HepG2 (cell line): ENCODE measurements at regions of chr15 and their contacts with region 1.

Region 1: GRCh38 chr15:48800811-48801455 is 9.9 kb downstream of the CEP152 start:
- DNase-seq: peak; percentile 26
- ATAC-seq: no peak
- H3K4me3 ChIP-seq: peak overlapping the region in 1 of 3 experiments; percentile 22; a peak in 2 of 6 replicates
- H3K27ac ChIP-seq: peak overlapping the region; percentile 56
- H3K4me1 ChIP-seq: peaks cover 21% of the 10 kb centered on the region
- H3K27me3 ChIP-seq: no peaks in the 10 kb centered on the region
- CTCF ChIP-seq: 0 out of 2 replicates have a peak, but pooled peaks have one; percentile 25
- EP300 ChIP-seq: no peak
- POLR2A ChIP-seq: no peak
- RAD21 ChIP-seq: no peak

Region 2: DNA sequence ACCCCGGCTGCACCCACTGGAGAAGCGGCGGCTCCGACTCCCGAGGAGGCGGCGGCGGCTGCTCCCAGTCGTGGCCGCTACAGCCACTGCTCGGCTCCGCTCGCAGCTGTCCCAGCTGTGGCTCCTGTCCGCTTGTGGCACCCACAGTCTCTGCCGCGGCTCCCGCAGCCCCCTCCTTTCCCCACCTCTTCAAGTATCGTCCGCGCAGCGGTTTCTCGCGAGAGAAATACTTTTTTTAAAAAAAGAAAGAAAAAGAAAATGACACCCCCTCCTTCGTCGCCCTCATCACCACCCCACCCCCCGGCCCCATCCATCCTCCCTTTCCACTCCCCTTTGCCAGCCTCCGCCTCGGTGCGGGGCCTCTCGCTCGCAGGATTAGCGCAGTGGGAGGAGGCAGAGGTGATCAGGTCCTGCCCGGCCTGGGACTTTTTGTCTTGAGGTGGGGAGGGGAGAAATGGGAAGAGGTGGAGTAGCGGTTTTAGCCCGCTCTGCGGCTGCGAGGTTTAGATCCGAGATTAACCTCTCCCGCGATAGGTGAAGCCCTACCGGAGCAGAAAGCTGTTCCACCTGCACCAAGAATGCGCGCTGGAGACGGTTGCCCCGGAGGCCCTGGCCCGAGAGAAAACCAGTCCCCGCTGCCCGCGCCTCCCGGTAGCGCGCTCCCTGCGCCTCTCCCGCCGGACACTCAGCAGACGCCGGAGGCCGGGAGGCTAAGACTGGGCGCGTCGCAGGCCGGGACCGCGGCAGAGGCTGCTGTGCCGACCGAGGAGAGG is 155.2 kb before region 1 on chr15 and contains the start of gene FBN1:
- CTCF ChIA-PET with region 1: no interaction called
- POLR2A ChIA-PET with region 1: no interaction called
- in situ Hi-C with region 1: no loop called
- intact Hi-C with region 1: loop called (anchors 10 kb)
- DNase-seq: peak; percentile 15
- ATAC-seq: peak; percentile 88
- H3K4me3 ChIP-seq: peak within 1 kb of the TSS; percentile 63 to 74 (median 64)
- H3K27ac ChIP-seq: no peak within 1 kb of the TSS
- H3K4me1 ChIP-seq: no peaks in the 10 kb centered on the region
- H3K27me3 ChIP-seq: peaks cover 2 to 29% of the 10 kb centered on the region in 2 experiments
- CTCF ChIP-seq: no peak
- EP300 ChIP-seq: no peak
- POLR2A ChIP-seq: no peak
- RAD21 ChIP-seq: no peak
- total RNA-seq, gene FBN1: 1.7 and 3.0 TPM in 2 replicates